ENCODE measurements at regions of chr6 and their contacts with region 1.

Region 1: DNA sequence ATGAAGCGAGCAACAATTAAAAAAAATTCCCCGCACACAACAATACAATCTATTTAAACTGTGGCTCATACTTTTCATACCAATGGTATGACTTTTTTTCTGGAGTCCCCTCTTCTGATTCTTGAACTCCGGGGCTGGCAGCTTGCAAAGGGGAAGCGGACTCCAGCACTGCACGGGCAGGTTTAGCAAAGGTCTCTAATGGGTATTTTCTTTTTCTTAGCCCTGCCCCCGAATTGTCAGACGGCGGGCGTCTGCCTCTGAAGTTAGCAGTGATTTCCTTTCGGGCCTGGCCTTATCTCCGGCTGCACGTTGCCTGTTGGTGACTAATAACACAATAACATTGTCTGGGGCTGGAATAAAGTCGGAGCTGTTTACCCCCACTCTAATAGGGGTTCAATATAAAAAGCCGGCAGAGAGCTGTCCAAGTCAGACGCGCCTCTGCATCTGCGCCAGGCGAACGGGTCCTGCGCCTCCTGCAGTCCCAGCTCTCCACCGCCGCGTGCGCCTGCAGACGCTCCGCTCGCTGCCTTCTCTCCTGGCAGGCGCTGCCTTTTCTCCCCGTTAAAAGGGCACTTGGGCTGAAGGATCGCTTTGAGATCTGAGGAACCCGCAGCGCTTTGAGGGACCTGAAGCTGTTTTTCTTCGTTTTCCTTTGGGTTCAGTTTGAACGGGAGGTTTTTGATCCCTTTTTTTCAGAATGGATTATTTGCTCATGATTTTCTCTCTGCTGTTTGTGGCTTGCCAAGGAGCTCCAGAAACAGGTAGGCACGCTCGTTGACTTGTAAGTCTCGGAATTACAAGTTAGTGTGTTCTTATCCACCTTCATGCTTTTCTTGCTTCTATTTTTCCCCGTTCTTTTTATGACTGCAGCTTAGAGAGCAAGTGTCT is at the start of gene EDN1:
- DNase-seq: peak; percentile 85
- ATAC-seq: peak; percentile 61
- H3K4me3 ChIP-seq: peak within 1 kb of the TSS; percentile 77
- H3K27ac ChIP-seq: peak within 1 kb of the TSS; percentile 86
- H3K4me1 ChIP-seq: peaks cover 70% of the 10 kb centered on the region
- H3K27me3 ChIP-seq: no peaks in the 10 kb centered on the region
- CTCF ChIP-seq: peak; percentile 45; the same call in 1 of the 2 replicates
- total RNA-seq, gene EDN1: 21.9 and 25.6 TPM in 2 replicates

Region 2: DNA sequence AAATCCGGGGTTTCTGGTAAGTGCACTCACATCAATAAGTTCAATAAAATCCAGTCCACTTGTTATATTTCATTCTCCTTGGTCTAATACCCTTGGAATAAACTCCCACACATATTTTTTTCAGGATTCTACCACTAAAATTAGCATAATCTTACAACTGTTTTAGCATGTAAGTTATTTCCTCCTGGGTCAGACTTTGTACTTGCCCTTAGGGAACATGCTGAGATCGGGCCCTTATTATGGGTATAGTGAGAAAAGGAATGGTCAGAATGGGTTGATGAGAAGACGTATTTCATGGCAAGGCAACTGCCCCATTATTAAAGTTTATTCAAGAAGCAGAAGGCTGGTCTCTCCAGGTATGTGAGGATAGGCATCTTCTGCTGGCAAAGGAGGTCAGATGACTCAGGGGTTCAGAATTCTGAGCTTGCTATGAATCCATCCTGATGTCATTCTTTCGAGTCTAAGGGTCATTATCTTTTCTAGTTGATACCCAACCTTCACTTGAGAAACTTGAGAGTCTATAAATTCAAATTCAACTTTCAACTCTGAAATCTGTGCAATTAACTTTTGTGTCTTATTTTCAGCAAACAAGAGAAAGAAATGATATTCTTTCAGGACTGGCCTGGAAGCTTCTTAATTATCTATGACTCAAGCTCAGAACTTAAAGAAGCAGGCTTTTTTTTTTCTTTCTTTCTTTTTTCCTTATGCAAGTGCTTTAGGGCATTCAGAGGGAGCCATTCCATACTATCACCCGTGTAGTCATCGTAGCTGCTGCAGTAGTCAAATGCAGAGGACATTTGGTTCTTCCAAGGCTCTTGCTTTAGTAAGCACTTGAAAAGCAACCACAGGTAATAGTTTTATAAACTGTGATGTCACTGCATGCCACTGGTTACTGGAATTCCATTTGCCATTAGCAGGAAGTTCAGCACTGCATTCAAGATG is 604.8 kb before region 1 on chr6:
- CTCF ChIA-PET with region 1: no interaction called
- POLR2A ChIA-PET with region 1: interaction called, 29 read pairs
- intact Hi-C with region 1: no loop called
- DNase-seq: peak; percentile 95
- ATAC-seq: peak; percentile 85
- H3K4me3 ChIP-seq: peak overlapping the region; percentile 17; the same call in 1 of the 2 replicates
- H3K27ac ChIP-seq: peak overlapping the region; percentile 65
- H3K4me1 ChIP-seq: peaks cover 47% of the 10 kb centered on the region
- H3K27me3 ChIP-seq: no peaks in the 10 kb centered on the region
- CTCF ChIP-seq: no peak

Region 3: DNA sequence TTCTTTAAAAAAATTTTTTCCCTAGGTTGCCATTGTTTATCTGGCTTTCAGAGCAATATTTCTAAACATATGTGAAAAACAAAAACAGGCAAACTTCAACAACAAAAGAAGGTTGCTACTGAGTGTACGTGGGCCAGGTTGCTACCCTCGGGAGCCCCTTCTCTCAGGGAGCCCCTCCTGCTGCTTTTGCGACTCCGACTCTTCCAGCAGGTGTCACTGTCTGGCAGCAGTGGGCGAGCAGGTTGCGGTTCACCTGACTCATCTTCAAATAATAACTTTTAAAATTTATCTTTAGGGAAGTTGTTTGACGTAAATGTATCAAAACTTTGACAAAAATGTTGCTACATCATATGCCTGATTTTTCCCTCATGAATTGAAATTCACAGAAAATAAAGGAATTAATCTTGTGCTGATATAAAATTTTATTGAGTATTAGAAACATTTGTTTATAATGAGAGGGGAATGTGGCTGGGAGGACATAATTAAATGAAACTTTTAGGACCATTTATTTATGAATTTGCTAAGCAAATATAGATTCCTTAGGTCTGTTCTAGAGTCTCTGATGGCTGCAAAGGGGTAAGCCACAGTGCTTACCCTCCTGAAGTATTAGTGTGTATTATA is 139.3 kb before region 1 on chr6:
- CTCF ChIA-PET with region 1: no interaction called
- POLR2A ChIA-PET with region 1: interaction called, 9 read pairs
- intact Hi-C with region 1: loop called (anchors 1 kb)
- DNase-seq: peak; percentile 72
- ATAC-seq: peak; percentile 35; the same call in 1 of the 2 replicates
- H3K4me3 ChIP-seq: no peak overlapping the region
- H3K27ac ChIP-seq: peak overlapping the region; percentile 80
- H3K4me1 ChIP-seq: peaks cover 41% of the 10 kb centered on the region
- H3K27me3 ChIP-seq: no peaks in the 10 kb centered on the region
- CTCF ChIP-seq: peak; percentile 94

Region 4: DNA sequence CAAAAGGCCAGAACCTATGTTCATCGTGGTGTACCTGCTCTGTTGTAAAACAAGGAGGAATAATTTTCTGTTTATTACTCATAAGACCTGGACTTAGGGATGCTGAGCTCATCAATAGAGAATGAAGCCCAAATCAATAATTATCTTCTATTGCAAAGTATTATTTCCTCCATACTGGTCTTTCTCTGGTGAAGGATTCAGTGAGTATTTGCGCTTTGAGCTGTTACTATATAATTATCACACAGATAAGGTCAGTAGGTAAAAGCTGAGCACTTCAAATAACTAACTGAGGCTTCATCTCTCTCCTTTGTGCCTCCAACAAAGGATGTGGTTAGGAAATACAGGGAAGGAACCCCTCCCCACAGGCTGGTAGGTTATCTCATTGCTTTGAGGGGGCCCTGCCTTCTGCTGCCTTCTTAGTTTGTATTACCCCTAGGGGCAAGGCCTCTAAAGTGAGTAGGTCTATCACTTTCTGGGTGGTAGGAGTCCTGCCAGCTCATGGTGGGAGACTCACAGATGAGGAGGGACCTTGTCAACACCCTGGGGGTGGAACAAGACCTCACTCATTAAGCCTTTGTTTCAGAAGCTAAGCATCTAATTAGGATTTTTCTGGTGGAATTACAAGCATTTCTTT is 34.5 kb after region 1 on chr6:
- CTCF ChIA-PET with region 1: interaction called, 12 read pairs
- POLR2A ChIA-PET with region 1: interaction called, 65 read pairs
- intact Hi-C with region 1: loop called (anchors 1 kb)
- DNase-seq: peak; percentile 37
- ATAC-seq: peak; percentile 10
- H3K4me3 ChIP-seq: peak overlapping the region; percentile 14
- H3K27ac ChIP-seq: peak overlapping the region; percentile 97
- H3K4me1 ChIP-seq: peaks cover 48% of the 10 kb centered on the region
- H3K27me3 ChIP-seq: no peaks in the 10 kb centered on the region
- CTCF ChIP-seq: no peak

Region 5: GRCh38 chr6:12369781-12370262 is 79.6 kb after region 1 on chr6:
- CTCF ChIA-PET with region 1: interaction called, 3 read pairs
- POLR2A ChIA-PET with region 1: interaction called, 5 read pairs
- intact Hi-C with region 1: loop called (anchors 1 kb)
- DNase-seq: peak; percentile 86
- ATAC-seq: peak; percentile 83
- H3K4me3 ChIP-seq: no peak overlapping the region
- H3K27ac ChIP-seq: 0 out of 2 replicates have a peak overlapping the region, but pooled peaks have one; percentile 2
- H3K4me1 ChIP-seq: peaks cover 25% of the 10 kb centered on the region
- H3K27me3 ChIP-seq: no peaks in the 10 kb centered on the region
- CTCF ChIP-seq: peak; percentile 69

Region 6: DNA sequence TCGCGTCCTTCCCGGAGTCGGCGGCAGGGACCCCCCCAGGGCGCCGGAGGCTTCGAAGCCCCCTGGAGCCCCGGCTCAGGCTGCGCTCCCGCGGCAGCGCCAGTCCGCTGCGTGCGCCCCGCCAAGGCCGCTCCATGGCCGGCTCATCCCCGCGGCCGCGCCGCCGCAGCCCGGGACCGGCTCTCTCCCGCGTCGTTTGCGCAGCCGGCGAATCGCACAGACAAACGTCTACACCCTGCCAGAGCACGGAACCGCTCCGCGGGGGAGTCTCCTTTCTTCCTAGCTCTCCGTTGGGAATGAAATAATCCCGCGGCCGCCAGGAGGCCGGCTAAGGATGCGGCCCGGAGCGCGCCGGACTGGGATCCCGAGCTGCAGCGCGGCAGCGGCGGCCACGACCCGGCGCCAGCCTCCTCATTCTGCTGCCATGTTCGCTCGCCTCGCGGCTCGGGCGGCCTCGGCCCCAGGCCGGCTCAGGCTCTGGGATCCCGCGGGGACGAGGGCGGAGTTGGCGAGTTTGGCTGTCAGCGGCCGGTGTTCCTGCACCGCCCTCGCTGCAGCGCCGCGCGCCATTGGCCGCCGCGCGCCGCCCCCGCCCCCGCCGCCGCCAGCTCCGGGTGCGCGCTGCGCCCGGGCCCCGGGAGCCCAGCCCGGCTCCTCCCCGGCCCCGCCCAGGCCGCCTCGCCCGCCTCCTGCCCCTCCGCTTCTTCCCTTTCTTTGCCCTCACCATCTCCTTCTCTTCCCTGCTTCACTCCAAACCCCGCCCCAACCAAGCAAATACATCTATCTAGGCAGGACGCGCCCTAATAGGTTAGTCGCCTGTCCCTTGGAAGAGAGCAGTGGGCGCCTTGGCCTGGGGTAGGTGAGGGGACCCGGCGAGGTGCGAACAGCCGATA is 1197.2 kb after region 1 on chr6 and contains the start of gene GFOD1:
- CTCF ChIA-PET with region 1: no interaction called
- POLR2A ChIA-PET with region 1: interaction called, 17 read pairs
- intact Hi-C with region 1: no loop called
- DNase-seq: peak; percentile 89
- ATAC-seq: peak; percentile 81
- H3K4me3 ChIP-seq: peak within 1 kb of the TSS; percentile 85
- H3K27ac ChIP-seq: peak within 1 kb of the TSS; percentile 46
- H3K4me1 ChIP-seq: peaks cover 28% of the 10 kb centered on the region
- H3K27me3 ChIP-seq: no peaks in the 10 kb centered on the region
- CTCF ChIP-seq: peak; percentile 23; the same call in 1 of the 2 replicates
- total RNA-seq, gene GFOD1: 16.0 and 21.8 TPM in 2 replicates

Measured in PC-3 (cell line).